Motor neuron (in vitro differentiated cells): ENCODE measurements at regions of chr2 and their contacts with region 1.

Region 1: GRCh38 chr2:137287936-137288639 is 522.7 kb downstream of the THSD7B start:
- ATAC-seq: peak in 7 of 8 experiments; percentile 32 to 92 (median 47)
- H3K4me3 ChIP-seq: no peak overlapping the region
- H3K27ac ChIP-seq: no peak overlapping the region
- H3K4me1 ChIP-seq: peaks cover 0 to 3% of the 10 kb centered on the region in 2 donors

Region 2: GRCh38 chr2:137178951-137179377 is 109.1 kb before region 1 on chr2:
- in situ Hi-C with region 1: loop called in 1 of 9 experiments (anchors 25 kb)
- ATAC-seq: peak in 7 of 8 experiments; percentile 38 to 85 (median 80)
- H3K4me3 ChIP-seq: no peak overlapping the region
- H3K27ac ChIP-seq: no peak overlapping the region
- H3K4me1 ChIP-seq: peaks cover 5 to 31% of the 10 kb centered on the region in 2 donors